CD4-positive, alpha-beta T cell (primary cell): ENCODE measurements at regions of chr10 and their contacts with region 1.

Region 1: DNA sequence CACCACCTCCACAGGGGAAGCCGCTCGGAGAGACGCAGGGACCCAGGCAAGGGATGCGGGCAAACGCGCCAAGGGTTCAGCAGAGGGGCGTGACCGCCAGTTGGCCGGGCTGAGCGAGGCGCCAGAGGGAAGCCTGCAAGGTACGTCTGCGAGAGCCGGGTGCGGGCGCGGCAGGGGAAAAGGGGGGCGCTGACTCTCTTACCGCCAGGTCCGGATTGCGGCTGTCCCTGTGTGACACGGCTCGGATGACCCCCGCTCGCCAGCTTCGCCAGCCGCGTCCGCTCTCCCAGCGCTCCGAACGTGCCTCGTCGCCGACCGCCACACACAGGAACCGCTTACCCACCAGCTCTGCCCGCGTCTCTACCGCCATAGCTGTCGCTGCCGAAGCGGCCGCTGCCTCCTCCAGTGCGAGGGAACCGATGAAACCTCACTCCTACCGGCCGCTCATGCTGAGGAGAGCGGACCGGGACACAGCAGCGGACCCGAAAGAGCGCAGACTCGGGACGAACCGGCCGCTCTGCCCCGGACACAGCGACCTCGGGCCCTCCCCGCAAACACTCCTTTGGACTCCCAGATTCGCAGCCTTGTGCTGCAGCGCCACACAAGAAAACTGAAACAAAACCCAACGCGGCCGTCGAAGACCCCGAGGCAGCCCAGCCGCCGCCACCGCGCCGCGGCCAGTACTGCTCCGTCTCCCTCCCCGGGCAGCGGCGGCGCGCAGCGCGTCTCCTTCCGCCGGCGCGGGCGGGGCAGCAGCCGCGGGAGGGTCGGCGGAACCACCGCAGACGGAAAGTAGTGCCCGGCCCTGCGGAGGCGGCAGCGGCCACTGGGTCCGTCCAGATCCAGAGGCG is at the start of gene JMJD1C:
- DNase-seq: peak; percentile 37 to 81 (median 52)
- ATAC-seq: peak; percentile 64
- H3K4me3 ChIP-seq: peak within 1 kb of the TSS; percentile 91
- H3K4me3 Mint-ChIP-seq: peak within 1 kb of the TSS; percentile 97
- H3K27ac ChIP-seq: peak within 1 kb of the TSS; percentile 49 to 57
- H3K27ac Mint-ChIP-seq: peak within 1 kb of the TSS; percentile 85
- H3K4me1 ChIP-seq: peaks cover 6% of the 10 kb centered on the region
- H3K4me1 Mint-ChIP-seq: peaks cover 67% of the 10 kb centered on the region
- H3K27me3 ChIP-seq: no peaks in the 10 kb centered on the region
- H3K27me3 Mint-ChIP-seq: no peaks in the 10 kb centered on the region
- CTCF ChIP-seq: no peak
- total RNA-seq, gene JMJD1C: 389 to 399 TPM

Region 2: DNA sequence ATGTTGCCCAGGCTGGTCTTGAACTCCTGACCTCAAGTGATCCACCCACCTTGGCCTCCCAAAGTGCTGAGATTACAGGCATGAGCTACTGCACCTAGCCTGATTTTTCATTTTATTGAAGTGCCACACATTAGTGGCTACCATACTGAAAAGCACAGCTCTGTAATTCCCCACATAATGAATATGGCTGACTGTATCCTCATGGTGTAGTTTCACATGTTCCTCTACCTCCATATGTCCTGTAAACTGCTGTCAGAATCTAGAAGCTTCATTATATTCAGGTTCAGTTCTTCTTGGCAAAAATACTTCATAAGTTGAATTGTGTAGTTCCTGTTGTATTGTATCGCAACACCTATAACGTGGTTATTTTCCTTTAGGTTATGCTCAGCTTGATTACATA is 10.9 kb before region 1 on chr10:
- CTCF ChIA-PET with region 1: interaction called, 11 read pairs
- POLR2A ChIA-PET with region 1: interaction called, 4 read pairs
- intact Hi-C with region 1: no loop called
- DNase-seq: no peak
- ATAC-seq: no peak
- H3K4me3 ChIP-seq: no peak overlapping the region
- H3K4me3 Mint-ChIP-seq: no peak overlapping the region
- H3K27ac ChIP-seq: no peak overlapping the region
- H3K27ac Mint-ChIP-seq: no peak overlapping the region
- H3K4me1 ChIP-seq: no peaks in the 10 kb centered on the region
- H3K4me1 Mint-ChIP-seq: peaks cover 36% of the 10 kb centered on the region
- H3K27me3 ChIP-seq: no peaks in the 10 kb centered on the region
- H3K27me3 Mint-ChIP-seq: no peaks in the 10 kb centered on the region
- CTCF ChIP-seq: no peak